ENCODE measurements at regions of chr1 and their contacts with region 1.

Region 1: DNA sequence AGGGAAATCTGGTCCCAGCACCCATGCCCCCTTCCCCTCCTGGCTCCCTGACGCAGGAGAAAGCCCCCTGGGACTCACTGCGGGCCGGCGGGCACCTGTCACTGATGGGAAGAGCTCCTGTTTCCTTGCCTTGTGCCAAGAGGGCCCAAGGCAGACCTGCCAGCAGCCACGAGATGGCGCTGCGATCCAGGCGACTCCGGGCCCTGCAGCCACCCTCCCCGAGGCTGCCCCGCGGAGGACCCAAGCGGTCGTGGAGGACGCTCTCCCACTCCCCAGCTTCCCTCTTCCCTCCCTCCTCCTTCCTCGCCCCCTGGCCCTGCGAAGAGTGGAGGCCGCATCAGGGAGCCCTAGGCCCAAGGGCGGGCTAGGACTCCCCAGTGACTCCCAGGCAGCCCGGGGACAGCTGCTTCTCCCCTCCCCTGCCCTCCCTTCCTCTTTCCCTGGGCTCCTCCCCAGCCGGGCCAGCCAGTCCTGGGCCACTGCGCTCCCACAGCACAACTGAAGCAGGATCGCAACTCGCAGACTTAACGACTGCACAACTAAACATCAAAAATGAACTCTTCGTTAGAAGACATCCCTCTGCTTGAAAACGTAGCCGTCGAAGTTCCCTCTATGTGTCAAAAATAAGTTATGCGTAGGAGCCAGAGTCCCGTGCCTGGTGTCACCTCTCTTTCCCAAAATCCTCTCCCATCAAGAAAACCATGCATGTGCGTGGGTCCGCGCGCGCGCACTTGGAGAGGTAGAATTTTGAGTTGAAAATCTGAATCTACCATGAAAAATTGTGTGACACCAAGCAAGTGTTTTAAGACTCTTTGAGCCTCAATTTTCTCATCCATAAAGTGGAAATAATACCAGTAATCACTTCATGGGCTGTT is 34.2 kb downstream of the BATF3 start:
- DNase-seq: peak; percentile 84
- ATAC-seq: peak; percentile 93
- H3K4me3 Mint-ChIP-seq: peak overlapping the region; percentile 59
- H3K27ac Mint-ChIP-seq: peak overlapping the region; percentile 63
- H3K4me1 Mint-ChIP-seq: peaks cover 16% of the 10 kb centered on the region
- H3K27me3 Mint-ChIP-seq: peaks cover 8% of the 10 kb centered on the region
- CTCF ChIP-seq: peak; percentile 95

Region 2: GRCh38 chr1:212477014-212477679 is 188.3 kb before region 1 on chr1:
- CTCF ChIA-PET with region 1: interaction called, 51 read pairs
- POLR2A ChIA-PET with region 1: no interaction called
- intact Hi-C with region 1: no loop called
- DNase-seq: peak; percentile 87
- ATAC-seq: peak; percentile 93
- H3K4me3 Mint-ChIP-seq: no peak overlapping the region
- H3K27ac Mint-ChIP-seq: no peak overlapping the region
- H3K4me1 Mint-ChIP-seq: peaks cover 22% of the 10 kb centered on the region
- H3K27me3 Mint-ChIP-seq: peaks cover 7% of the 10 kb centered on the region
- CTCF ChIP-seq: peak; percentile 84

Region 3: GRCh38 chr1:212683357-212683722 is 17.9 kb after region 1 on chr1:
- CTCF ChIA-PET with region 1: interaction called, 43 read pairs
- POLR2A ChIA-PET with region 1: interaction called, 6 read pairs
- intact Hi-C with region 1: no loop called
- DNase-seq: peak; percentile 94
- ATAC-seq: peak; percentile 74
- H3K4me3 Mint-ChIP-seq: peak overlapping the region; percentile 67
- H3K27ac Mint-ChIP-seq: peak overlapping the region; percentile 97
- H3K4me1 Mint-ChIP-seq: peaks cover 52% of the 10 kb centered on the region
- H3K27me3 Mint-ChIP-seq: no peaks in the 10 kb centered on the region
- CTCF ChIP-seq: no peak

Region 4: GRCh38 chr1:212760126-212760823 is 94.8 kb after region 1 on chr1:
- CTCF ChIA-PET with region 1: interaction called, 35 read pairs
- POLR2A ChIA-PET with region 1: interaction called, 3 read pairs
- intact Hi-C with region 1: no loop called
- DNase-seq: peak; percentile 76
- ATAC-seq: peak; percentile 96
- H3K4me3 Mint-ChIP-seq: no peak overlapping the region
- H3K27ac Mint-ChIP-seq: no peak overlapping the region
- H3K4me1 Mint-ChIP-seq: peaks cover 17% of the 10 kb centered on the region
- H3K27me3 Mint-ChIP-seq: no peaks in the 10 kb centered on the region
- CTCF ChIP-seq: peak; percentile 62

Region 5: GRCh38 chr1:212782422-212783154 is 117.1 kb after region 1 on chr1:
- CTCF ChIA-PET with region 1: interaction called, 118 read pairs
- POLR2A ChIA-PET with region 1: interaction called, 4 read pairs
- intact Hi-C with region 1: loop called (anchors 2 kb)
- DNase-seq: no peak
- ATAC-seq: peak; percentile 68
- H3K4me3 Mint-ChIP-seq: no peak overlapping the region
- H3K27ac Mint-ChIP-seq: no peak overlapping the region
- H3K4me1 Mint-ChIP-seq: peaks cover 23% of the 10 kb centered on the region
- H3K27me3 Mint-ChIP-seq: no peaks in the 10 kb centered on the region
- CTCF ChIP-seq: peak; percentile 86

Region 6: DNA sequence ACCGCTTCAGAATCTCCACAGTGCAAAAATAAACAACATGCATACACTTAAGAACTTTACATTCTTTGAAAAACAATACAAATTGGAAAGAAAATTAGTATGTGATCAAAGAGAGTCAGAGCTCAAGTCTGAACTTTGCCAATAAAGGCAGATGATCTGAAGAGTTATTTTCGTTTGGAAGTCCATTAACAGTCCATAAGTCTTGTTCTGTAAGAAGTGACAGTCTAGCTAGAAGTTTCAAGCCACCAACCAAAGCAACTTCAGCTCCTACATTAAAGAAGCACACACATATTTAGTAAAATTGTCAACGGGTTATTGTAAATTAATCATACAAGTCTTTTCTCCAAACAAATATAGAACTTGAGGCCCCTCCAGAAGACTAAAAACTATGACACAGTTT is 329.4 kb after region 1 on chr1:
- CTCF ChIA-PET with region 1: interaction called, 37 read pairs
- POLR2A ChIA-PET with region 1: no interaction called
- intact Hi-C with region 1: no loop called
- DNase-seq: no peak
- ATAC-seq: no peak
- H3K4me3 Mint-ChIP-seq: no peak overlapping the region
- H3K27ac Mint-ChIP-seq: no peak overlapping the region
- H3K4me1 Mint-ChIP-seq: peaks cover 3% of the 10 kb centered on the region
- H3K27me3 Mint-ChIP-seq: no peaks in the 10 kb centered on the region
- CTCF ChIP-seq: no peak

Measured in activated CD8-positive, alpha-beta T cell treated with anti-CD3 and anti-CD28 coated beads for 36 hours (primary cell).